ENCODE measurements at regions of chr5 and their contacts with region 1.

Region 1: DNA sequence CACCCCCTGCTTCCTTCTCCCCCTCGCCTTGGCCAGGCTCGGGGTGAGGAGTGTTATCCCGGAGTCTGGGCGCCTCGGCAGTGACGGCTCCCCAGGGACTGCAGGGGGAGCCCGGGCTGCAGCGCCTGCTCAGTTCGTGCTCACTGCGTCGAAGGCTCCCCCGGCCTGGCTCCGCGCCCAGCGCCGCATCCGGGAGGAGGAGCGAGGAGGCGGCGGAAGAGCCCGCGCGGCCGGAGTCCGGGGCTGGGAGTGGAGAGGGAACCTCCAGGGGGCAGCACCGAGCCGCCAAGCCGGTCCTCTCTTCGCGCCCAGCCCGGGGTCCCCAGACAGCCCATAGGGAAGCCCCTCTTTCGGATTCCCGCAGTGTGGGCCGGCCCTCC is 1.3 kb upstream of the EGR1 start:
- DNase-seq: peak; percentile 98
- H3K4me3 ChIP-seq: peak overlapping the region; percentile 86
- H3K27ac ChIP-seq: peak overlapping the region; percentile 100
- H3K4me1 ChIP-seq: peaks cover 13% of the 10 kb centered on the region
- H3K27me3 ChIP-seq: no peaks in the 10 kb centered on the region
- CTCF ChIP-seq: peak; percentile 92

Region 2: GRCh38 chr5:138252944-138253343 is 211.1 kb before region 1 on chr5:
- CTCF ChIA-PET with region 1: interaction called, 12 read pairs
- POLR2A ChIA-PET with region 1: no interaction called
- intact Hi-C with region 1: no loop called
- DNase-seq: no peak
- H3K4me3 ChIP-seq: no peak overlapping the region
- H3K27ac ChIP-seq: no peak overlapping the region
- H3K4me1 ChIP-seq: no peaks in the 10 kb centered on the region
- H3K27me3 ChIP-seq: no peaks in the 10 kb centered on the region
- CTCF ChIP-seq: no peak

Region 3: DNA sequence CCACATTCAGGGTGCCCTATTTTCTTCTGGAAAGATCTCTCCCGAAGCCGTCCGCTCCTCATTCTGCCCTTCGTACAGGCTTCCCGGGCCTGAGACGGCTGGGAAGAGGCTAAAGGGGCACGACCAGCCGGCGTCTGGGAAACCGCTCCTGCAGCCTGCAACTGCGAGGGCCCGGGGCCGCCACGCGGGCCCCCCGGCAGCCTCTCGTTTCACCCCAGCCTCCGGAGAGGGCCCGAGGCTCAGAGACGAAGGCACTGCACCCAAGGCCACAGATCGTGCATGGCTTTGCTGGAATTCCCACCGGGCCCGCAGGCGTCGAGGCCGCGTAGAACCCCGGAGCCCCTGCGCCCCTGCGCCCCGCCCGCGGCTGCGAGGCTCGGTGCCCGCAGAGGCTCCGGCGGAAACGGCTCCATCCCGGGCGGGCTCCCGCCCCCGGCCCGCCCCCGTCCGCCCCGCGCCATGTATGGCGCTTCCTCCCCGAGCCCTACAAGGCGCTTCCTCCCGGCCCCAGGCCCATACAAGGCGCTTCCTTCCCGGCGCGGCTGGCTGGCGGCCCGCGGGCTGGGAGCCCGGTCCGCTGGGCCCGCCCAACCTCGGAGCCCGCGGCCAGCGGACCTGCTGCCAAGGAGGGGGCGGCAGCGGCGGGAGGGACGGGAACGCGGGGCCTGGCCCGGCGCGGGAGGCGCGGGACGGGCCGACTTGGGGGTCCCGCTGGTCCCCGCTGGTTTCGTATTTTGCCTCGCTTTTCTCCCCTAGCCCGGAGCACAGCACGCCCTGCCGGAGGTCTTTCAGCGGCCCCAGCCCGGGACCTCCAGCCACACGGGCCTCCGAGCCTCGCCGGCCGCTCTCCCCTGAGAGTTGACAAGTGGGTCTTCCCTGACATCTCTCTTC is 27.9 kb after region 1 on chr5:
- CTCF ChIA-PET with region 1: no interaction called
- POLR2A ChIA-PET with region 1: interaction called, 14 read pairs
- intact Hi-C with region 1: no loop called
- DNase-seq: peak; percentile 92
- H3K4me3 ChIP-seq: peak overlapping the region; percentile 52
- H3K27ac ChIP-seq: peak overlapping the region; percentile 81
- H3K4me1 ChIP-seq: peaks cover 23% of the 10 kb centered on the region
- H3K27me3 ChIP-seq: no peaks in the 10 kb centered on the region
- CTCF ChIP-seq: no peak

Region 4: DNA sequence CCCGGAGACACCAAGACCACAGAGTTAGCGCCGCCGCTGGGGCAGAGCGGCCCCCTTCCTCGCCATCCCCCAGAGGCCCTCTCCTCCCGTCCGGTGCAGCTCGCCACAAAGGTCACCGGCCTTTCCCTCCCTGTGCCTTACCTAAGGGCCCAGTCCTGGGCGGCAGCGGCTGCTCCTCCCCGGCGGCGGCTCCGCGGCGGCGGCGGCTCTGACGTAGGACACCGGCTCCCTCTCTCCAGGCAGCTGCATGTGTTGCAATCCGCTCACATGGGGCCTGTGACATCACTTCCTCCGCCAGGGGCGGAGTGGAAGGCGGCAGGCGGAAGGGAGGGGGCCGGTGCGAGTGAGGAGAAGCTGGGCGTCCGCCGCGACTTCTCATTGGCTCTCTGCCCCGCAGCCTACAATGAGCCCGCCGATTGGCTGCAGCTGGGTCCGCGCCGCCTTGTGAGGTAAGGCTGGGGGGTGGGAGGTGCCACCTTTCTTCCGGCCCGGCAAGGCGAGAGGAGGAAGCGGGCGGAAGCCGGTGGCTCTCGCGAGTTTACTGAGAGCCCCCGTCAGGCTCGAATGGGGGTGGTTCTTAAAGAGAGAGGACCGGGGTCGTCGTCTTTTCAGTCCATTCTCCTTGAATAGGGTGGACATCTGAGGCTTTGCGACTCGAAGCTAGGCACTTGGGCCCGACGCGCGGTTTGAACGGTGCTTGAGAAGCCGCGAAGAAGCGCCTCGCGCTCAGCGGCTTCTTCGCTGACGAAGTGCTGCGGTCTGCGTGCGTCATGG is 79.1 kb after region 1 on chr5 and contains the start of gene ETF1:
- CTCF ChIA-PET with region 1: no interaction called
- POLR2A ChIA-PET with region 1: no interaction called
- intact Hi-C with region 1: loop called (anchors 2 kb)
- DNase-seq: peak; percentile 100
- H3K4me3 ChIP-seq: peak within 1 kb of the TSS; percentile 87
- H3K27ac ChIP-seq: peak within 1 kb of the TSS; percentile 99
- H3K4me1 ChIP-seq: peaks cover 28% of the 10 kb centered on the region
- H3K27me3 ChIP-seq: no peaks in the 10 kb centered on the region
- CTCF ChIP-seq: no peak
- total RNA-seq, gene ETF1: 172 and 191 TPM in 2 replicates

Region 5: DNA sequence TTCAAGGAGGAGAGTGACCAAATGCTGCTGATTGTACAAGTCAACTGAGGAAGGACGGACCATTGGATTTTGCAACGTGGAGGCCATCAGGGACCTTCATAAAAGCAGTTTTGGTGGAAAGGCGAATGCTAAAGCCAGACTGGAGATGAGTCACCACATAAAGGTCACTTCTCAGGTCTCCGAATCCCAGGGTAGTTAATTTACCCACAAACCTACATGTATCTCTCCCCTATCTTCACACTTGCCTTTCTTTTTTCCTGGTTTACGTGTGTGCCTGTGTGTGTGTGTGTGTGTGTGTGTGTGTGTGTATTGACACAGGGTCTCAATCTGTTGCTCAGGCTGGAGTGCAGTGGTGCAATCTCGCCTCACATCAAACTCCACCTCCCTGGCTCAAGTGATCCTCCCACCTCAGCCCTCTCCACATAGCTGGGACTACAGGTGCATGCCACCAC is 284.7 kb after region 1 on chr5:
- CTCF ChIA-PET with region 1: no interaction called
- POLR2A ChIA-PET with region 1: no interaction called
- intact Hi-C with region 1: no loop called
- DNase-seq: no peak
- H3K4me3 ChIP-seq: no peak overlapping the region
- H3K27ac ChIP-seq: no peak overlapping the region
- H3K4me1 ChIP-seq: peaks cover 8% of the 10 kb centered on the region
- H3K27me3 ChIP-seq: no peaks in the 10 kb centered on the region
- CTCF ChIP-seq: no peak

Region 6: GRCh38 chr5:139273572-139274289 is 809.7 kb after region 1 on chr5:
- CTCF ChIA-PET with region 1: no interaction called
- POLR2A ChIA-PET with region 1: no interaction called
- intact Hi-C with region 1: loop called (anchors 10 kb)
- DNase-seq: peak; percentile 90
- H3K4me3 ChIP-seq: peak overlapping the region; percentile 73
- H3K27ac ChIP-seq: peak overlapping the region; percentile 75
- H3K4me1 ChIP-seq: peaks cover 47% of the 10 kb centered on the region
- H3K27me3 ChIP-seq: no peaks in the 10 kb centered on the region
- CTCF ChIP-seq: no peak